Esophagus squamous epithelium (tissue), 5 donors: ENCODE measurements at regions of chr7 and their contacts with region 1.

Region 1: DNA sequence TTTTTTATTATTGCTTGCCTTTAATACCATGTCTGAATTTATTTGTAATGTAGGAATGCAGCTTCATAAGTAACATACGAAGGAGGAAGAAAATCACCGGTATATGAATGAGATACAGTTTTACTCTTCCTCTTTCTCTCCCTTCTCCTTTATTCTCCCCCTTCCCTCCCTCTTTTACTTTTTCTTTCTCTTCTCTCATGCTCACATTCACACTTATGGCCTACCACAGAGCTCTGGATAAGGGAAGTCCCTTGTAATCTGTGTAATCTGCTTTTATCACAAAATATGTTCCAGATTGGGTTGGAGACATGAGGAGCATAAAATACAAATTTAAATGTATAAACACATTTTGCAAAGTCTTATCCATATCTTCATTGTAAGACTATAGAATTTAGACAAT is 59.4 kb downstream of the MDFIC start:
- DNase-seq: no peak
- H3K4me3 ChIP-seq: no peak overlapping the region
- H3K27ac ChIP-seq: no peak overlapping the region
- H3K4me1 ChIP-seq: peaks cover 3 to 12% (median 5%) of the 10 kb centered on the region in 3 donors
- H3K27me3 ChIP-seq: no peaks in the 10 kb centered on the region
- CTCF ChIP-seq: no peak
- POLR2A ChIP-seq: no peak

Region 2: DNA sequence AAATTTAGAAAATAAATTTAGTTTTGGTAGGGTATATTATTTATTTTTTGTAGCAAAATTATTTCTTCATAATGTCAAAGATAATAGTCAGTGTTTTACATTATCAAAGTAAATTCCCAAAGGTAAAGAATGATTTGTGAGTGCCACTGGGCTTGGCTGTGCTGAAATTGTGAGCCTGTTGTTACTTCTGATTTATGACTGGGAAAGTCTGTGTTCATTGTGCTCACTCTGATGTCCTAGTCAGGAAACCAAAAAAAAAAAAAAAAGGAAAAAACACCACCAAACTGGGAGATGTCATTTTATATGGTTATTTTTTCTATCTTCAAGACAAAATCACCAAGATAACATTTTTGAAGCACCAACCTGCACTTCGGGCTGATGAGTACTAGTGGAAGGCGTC is 15.2 kb before region 1 on chr7:
- intact Hi-C with region 1: loop called (anchors 2 kb)
- DNase-seq: no peak
- H3K4me3 ChIP-seq: no peak overlapping the region
- H3K27ac ChIP-seq: no peak overlapping the region
- H3K4me1 ChIP-seq: peaks cover 0 to 10% (median 0%) of the 10 kb centered on the region in 3 donors
- H3K27me3 ChIP-seq: no peaks in the 10 kb centered on the region
- CTCF ChIP-seq: no peak
- POLR2A ChIP-seq: no peak

Region 3: DNA sequence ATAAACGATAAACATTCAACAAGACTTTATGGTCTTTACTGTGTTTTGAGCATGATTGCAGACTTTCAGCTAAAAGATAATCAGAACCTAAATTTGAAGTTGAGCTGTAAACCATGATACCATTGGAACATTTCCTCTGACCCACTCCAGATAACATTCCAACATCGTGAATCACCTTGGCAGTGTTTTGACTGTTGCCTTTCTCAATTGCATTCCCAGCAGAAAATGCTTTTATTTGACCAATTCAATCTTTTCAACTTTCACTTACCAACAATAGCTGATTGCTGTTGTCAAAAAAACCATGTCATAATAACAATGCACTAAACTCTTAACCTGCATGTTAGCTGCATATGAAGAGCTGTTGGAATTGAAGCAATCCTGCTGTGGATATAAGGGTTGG is 106.1 kb after region 1 on chr7:
- intact Hi-C with region 1: no loop called
- DNase-seq: no peak
- H3K4me3 ChIP-seq: no peak overlapping the region
- H3K27ac ChIP-seq: no peak overlapping the region
- H3K4me1 ChIP-seq: peaks cover 0 to 19% (median 0%) of the 10 kb centered on the region in 3 donors
- H3K27me3 ChIP-seq: no peaks in the 10 kb centered on the region
- CTCF ChIP-seq: no peak
- POLR2A ChIP-seq: no peak

Region 4: GRCh38 chr7:115191526-115191925 is 210.2 kb after region 1 on chr7:
- intact Hi-C with region 1: no loop called
- DNase-seq: no peak
- H3K4me3 ChIP-seq: no peak overlapping the region
- H3K27ac ChIP-seq: no peak overlapping the region
- H3K4me1 ChIP-seq: no peaks in the 10 kb centered on the region
- H3K27me3 ChIP-seq: no peaks in the 10 kb centered on the region
- CTCF ChIP-seq: no peak
- POLR2A ChIP-seq: no peak